Activated CD8-positive, alpha-beta T cell treated with anti-CD3 and anti-CD28 coated beads for 36 hours (primary cell): ENCODE measurements at regions of chr19 and their contacts with region 1.

Region 1: DNA sequence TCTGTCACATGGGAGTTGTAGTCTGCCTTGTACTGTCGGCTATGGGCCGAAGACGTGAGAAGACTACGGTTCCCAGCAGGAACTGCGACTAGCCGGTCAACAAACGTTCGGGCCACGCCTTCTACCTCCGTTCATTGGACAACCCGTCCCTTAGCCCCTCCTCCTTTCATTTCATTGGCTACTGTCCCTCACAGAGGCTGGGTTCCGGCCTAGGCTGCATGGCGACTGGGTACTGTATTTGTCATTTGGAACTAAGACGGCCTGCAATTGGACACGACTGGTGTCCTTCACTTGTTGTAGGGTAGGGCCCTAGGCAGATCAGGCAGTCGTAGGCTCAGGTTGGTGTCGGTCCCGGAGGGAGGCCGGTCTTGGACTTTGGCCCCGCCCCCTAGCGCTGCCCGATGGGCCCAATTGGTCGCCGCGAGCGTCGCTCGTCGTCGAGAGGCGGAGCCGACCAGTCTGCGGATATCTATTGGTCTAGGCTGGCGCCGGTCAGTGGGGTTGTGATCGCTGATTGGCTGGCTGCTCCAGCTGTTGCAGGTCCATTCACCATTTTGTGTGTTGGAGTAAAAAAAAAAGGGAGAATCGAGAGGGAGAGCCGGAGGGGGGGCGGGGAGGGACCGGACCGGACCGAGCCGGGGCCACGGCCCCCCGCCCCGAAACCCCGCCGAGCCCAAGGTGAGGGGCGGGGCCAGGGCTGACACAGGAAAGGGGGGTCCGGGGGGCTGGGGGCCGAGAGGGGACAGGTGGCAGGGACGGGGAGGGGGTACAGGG is at the start of gene CIC:
- DNase-seq: peak; percentile 99
- ATAC-seq: peak; percentile 80
- H3K4me3 Mint-ChIP-seq: no peak within 1 kb of the TSS
- H3K27ac Mint-ChIP-seq: peak within 1 kb of the TSS; percentile 99
- H3K4me1 Mint-ChIP-seq: peaks cover 26% of the 10 kb centered on the region
- H3K27me3 Mint-ChIP-seq: no peaks in the 10 kb centered on the region
- CTCF ChIP-seq: no peak
- total RNA-seq, gene CIC: 60.7 to 65.6 TPM

Region 2: GRCh38 chr19:42254989-42255765 is 13.7 kb before region 1 on chr19 and contains the start of gene ERF:
- CTCF ChIA-PET with region 1: interaction called, 4 read pairs
- POLR2A ChIA-PET with region 1: interaction called, 16 read pairs
- intact Hi-C with region 1: loop called (anchors 2 kb)
- DNase-seq: peak; percentile 95
- ATAC-seq: peak; percentile 76
- H3K4me3 Mint-ChIP-seq: peak within 1 kb of the TSS; percentile 95
- H3K27ac Mint-ChIP-seq: peak within 1 kb of the TSS; percentile 81
- H3K4me1 Mint-ChIP-seq: peaks cover 27% of the 10 kb centered on the region
- H3K27me3 Mint-ChIP-seq: peaks cover 5% of the 10 kb centered on the region
- CTCF ChIP-seq: no peak
- total RNA-seq, gene ERF: 60.0 to 69.2 TPM

Region 3: GRCh38 chr19:42290523-42291438 is 21.9 kb after region 1 on chr19:
- CTCF ChIA-PET with region 1: no interaction called
- POLR2A ChIA-PET with region 1: no interaction called
- intact Hi-C with region 1: no loop called
- DNase-seq: peak; percentile 77
- ATAC-seq: peak; percentile 87
- H3K4me3 Mint-ChIP-seq: no peak overlapping the region
- H3K27ac Mint-ChIP-seq: no peak overlapping the region
- H3K4me1 Mint-ChIP-seq: peaks cover 8% of the 10 kb centered on the region
- H3K27me3 Mint-ChIP-seq: no peaks in the 10 kb centered on the region
- CTCF ChIP-seq: peak; percentile 63